Heart right ventricle (tissue), 16 donors: ENCODE measurements at regions of chr7 and their contacts with region 1.

Region 1: GRCh38 chr7:97027427-97028234 is 3.0 kb upstream of the DLX5 start:
- DNase-seq: peak; percentile 70 to 73
- ATAC-seq: peak; percentile 77 to 91 (median 86)
- H3K4me3 ChIP-seq: peak overlapping the region in 9 of 10 donors; percentile 24 to 61 (median 47)
- H3K27ac ChIP-seq: no peak overlapping the region
- H3K4me1 ChIP-seq: peaks cover 0 to 42% (median 25%) of the 10 kb centered on the region in 9 donors
- H3K27me3 ChIP-seq: peaks cover 9 to 99% (median 91%) of the 10 kb centered on the region in 7 donors
- CTCF ChIP-seq: peak; percentile 44 to 94 (median 88)

Region 2: DNA sequence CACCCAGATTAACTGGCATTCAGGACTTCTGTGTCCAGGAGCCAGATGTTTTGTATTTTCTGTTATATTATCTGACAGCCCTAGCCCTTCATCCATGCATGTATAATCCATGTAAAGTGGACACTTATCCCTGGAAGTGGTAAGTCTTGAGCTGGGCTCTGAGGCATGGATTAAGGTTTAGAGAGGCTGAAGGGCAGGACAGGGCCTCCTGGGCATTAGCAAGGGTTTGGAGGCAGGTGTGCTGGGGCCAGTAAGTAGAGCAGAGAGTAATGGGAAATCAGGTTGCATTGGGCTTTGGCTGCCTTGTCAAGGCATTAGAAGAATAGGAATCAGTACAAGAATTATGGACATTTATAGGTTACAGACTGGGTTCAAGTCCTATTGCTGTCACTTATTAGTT is 1117.3 kb before region 1 on chr7:
- intact Hi-C with region 1: loop called in 7 of 10 experiments (anchors 5 to 10 kb)
- DNase-seq: no peak
- ATAC-seq: no peak
- H3K4me3 ChIP-seq: no peak overlapping the region
- H3K27ac ChIP-seq: no peak overlapping the region
- H3K4me1 ChIP-seq: no peaks in the 10 kb centered on the region
- H3K27me3 ChIP-seq: no peaks in the 10 kb centered on the region
- CTCF ChIP-seq: no peak

Region 3: DNA sequence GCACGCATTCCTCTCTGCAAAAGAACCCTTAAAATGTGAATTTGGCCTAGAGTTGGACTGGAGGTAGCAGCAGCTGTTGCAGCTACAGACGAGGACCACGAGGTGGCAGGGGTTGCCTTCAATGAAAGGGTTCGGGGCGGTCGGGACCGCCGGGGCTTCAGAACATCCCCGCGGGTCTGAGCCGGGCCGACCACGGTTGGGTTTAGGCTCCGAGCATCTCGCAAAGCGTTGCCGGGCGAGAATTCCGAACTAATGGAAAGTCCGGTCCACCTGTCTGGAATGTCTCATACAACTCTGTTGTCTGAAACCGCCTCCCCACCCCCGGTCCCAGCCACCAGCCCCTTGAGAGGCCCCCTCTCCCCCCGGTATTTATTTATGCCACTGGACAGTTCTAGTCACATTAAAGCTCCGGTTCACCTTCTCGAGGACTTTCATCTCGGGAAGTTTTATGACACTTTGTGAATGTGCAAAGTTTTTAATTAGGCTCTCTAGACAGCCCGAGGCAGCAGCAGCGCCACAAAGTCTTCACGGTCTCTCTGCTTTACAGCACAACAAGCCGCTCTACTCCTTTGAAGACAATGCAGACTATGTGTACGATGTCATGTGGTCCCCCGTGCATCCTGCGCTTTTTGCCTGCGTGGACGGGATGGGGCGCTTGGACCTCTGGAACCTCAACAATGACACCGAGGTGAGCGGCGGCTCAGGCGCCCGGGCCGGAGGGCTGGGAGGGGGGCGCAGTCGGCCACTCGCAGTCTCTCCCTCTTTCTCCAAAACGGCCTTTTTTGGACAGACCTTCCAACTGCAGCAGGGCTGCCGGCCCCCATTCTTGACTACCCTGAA is 951.9 kb before region 1 on chr7:
- intact Hi-C with region 1: loop called (anchors 1 to 5 kb)
- DNase-seq: peak; percentile 50 to 57
- ATAC-seq: peak; percentile 91 to 98 (median 96)
- H3K4me3 ChIP-seq: peak overlapping the region; percentile 25 to 66 (median 60)
- H3K27ac ChIP-seq: no peak overlapping the region
- H3K4me1 ChIP-seq: peaks cover 0 to 13% (median 5%) of the 10 kb centered on the region in 9 donors
- H3K27me3 ChIP-seq: peaks cover 0 to 39% (median 0%) of the 10 kb centered on the region in 7 donors
- CTCF ChIP-seq: peak; percentile 67 to 89 (median 83)

Region 4: DNA sequence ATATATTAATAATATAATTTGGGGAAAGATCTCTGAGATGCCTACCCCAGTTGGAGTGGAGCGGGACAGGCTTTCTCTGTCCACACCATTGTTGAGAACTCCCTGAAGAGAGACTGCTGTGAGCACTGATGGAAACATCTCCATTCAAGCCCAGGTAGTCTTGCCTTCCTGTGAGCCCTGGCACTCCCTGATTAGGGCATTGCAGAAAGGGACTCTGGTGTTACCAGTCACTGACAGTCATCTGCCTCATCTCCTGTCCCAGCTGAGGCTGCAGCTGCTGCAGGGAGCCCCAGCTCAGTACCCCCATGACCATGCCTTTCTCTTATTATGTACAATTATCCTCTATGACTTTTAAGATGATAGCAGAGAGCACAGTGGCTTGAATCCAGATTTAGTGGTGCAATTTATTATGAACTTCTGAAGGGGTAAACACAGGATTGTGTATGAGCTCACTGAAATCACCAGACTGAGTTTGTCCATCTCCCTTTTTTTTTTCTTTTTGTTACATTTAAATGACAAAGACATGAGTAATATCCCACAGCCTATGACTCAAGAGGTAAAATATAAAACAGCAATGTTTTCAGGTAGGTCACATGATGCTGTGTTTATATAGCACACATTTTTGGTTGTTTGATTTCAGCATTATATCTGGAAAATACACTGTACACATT is 942.6 kb before region 1 on chr7:
- intact Hi-C with region 1: loop called in 1 of 10 experiments (anchors 5 kb)
- DNase-seq: no peak
- ATAC-seq: no peak
- H3K4me3 ChIP-seq: no peak overlapping the region
- H3K27ac ChIP-seq: no peak overlapping the region
- H3K4me1 ChIP-seq: no peaks in the 10 kb centered on the region
- H3K27me3 ChIP-seq: no peaks in the 10 kb centered on the region
- CTCF ChIP-seq: no peak

Region 5: GRCh38 chr7:96188174-96188581 is 839.5 kb before region 1 on chr7:
- intact Hi-C with region 1: loop called in 1 of 10 experiments (anchors 10 kb)
- DNase-seq: no peak
- ATAC-seq: no peak
- H3K4me3 ChIP-seq: peak overlapping the region in 1 of 10 donors; percentile 16
- H3K27ac ChIP-seq: no peak overlapping the region
- H3K4me1 ChIP-seq: peaks cover 0 to 3% (median 0%) of the 10 kb centered on the region in 9 donors
- H3K27me3 ChIP-seq: no peaks in the 10 kb centered on the region
- CTCF ChIP-seq: no peak

Region 6: DNA sequence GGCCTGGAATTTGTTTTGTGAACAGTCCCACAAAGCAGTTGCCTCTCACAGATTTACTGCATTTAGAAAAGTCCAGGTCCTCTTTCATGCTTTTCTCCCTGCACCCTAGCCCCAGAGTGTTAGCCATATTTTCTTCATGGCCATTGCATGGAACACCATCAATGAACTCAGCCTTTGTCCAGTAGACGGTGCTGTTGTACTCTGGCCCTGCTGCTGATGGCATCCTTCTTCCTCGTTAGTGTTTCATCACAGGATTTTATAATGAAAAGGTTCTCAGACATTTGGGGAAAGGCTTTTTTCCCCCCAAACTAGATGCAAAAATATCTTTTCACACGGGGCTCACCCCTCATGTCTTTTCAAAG is 612.7 kb before region 1 on chr7:
- intact Hi-C with region 1: loop called in 6 of 10 experiments (anchors 2 to 10 kb)
- DNase-seq: peak in 1 of 2 donors; percentile 10
- ATAC-seq: peak in 5 of 8 donors; percentile 46 to 65 (median 56)
- H3K4me3 ChIP-seq: no peak overlapping the region
- H3K27ac ChIP-seq: no peak overlapping the region
- H3K4me1 ChIP-seq: peaks cover 0 to 28% (median 5%) of the 10 kb centered on the region in 9 donors
- H3K27me3 ChIP-seq: no peaks in the 10 kb centered on the region
- CTCF ChIP-seq: peak; percentile 28 to 66 (median 51)

Region 7: DNA sequence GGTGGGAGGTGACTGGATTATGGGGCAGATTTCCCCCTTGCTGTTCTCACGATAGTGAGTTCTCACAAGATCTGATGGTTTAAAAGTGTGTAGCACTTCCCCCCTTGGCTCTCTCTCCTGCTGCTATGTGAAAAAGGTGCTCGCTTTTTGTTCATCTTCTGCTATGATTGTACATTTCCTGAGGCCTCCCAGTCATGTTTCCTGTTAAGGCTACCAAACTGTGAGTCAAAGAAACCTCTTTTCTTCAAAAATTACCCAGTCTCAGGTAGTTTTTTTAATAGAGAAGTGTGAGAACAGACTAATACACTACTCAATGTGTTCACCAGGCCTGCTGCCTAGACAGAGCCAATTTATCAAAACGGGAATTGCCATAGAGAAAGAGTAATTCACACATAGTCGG is 139.5 kb after region 1 on chr7:
- intact Hi-C with region 1: no loop called
- DNase-seq: no peak
- ATAC-seq: no peak
- H3K4me3 ChIP-seq: no peak overlapping the region
- H3K27ac ChIP-seq: no peak overlapping the region
- H3K4me1 ChIP-seq: no peaks in the 10 kb centered on the region
- H3K27me3 ChIP-seq: no peaks in the 10 kb centered on the region
- CTCF ChIP-seq: no peak